GM12878 (cell line): ENCODE measurements at regions of chr15 and their contacts with region 1.

Region 1: GRCh38 chr15:73650416-73651126 is 17.4 kb upstream of the NPTN start:
- DNase-seq: no peak
- ATAC-seq: peak; percentile 31; the same call in 2 of the 3 replicates
- H3K4me3 ChIP-seq: no peak overlapping the region
- H3K27ac ChIP-seq: no peak overlapping the region
- H3K4me1 ChIP-seq: no peaks in the 10 kb centered on the region; the same call in 1 of the 2 replicates
- H3K27me3 ChIP-seq: no peaks in the 10 kb centered on the region
- CTCF ChIP-seq: no peak
- EP300 ChIP-seq: no peak
- POLR2A ChIP-seq: no peak
- RAD21 ChIP-seq: no peak

Region 2: DNA sequence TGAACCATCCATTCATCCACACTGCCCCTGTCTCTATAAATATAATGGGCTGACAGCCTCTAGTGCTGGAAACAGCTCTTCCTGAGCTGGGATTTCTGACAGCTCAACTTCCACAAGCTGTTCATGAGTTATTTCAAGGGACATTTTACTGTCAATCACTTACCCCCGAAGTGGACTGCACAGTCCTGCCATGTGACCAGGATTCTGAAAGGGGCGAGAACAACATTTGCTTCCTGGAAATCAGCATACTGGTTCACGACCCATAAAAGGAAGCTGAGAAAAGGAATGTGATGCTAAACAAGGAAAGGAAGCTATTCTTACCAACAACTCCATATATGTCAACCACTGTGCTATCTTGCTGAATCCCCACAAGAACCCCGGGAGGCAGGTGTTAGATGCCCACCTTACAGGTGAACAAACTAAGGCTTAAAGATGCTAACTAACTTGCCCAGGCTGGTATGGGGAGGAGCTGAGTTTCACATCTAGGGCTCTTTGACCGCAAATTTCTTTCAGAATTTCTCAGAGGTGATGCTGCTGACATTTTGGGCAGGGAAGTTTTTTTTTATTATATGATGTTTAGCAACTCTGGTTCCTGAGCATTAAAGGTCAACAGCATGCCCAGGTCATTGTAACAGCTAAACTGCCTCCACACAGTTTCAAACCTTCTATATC is 224.1 kb before region 1 on chr15:
- CTCF ChIA-PET with region 1: no interaction called
- POLR2A ChIA-PET with region 1: no interaction called
- RAD21 ChIA-PET with region 1: no interaction called
- SMC1A ChIA-PET with region 1: no interaction called
- in situ Hi-C with region 1: no loop called
- intact Hi-C with region 1: loop called (anchors 10 kb)
- DNase-seq: no peak
- ATAC-seq: peak; percentile 57; the same call in 2 of the 3 replicates
- H3K4me3 ChIP-seq: no peak overlapping the region
- H3K27ac ChIP-seq: no peak overlapping the region
- H3K4me1 ChIP-seq: no peaks in the 10 kb centered on the region
- H3K27me3 ChIP-seq: no peaks in the 10 kb centered on the region; a peak in 2 of 4 replicates
- CTCF ChIP-seq: no peak
- EP300 ChIP-seq: no peak
- POLR2A ChIP-seq: no peak
- RAD21 ChIP-seq: no peak

Region 3: DNA sequence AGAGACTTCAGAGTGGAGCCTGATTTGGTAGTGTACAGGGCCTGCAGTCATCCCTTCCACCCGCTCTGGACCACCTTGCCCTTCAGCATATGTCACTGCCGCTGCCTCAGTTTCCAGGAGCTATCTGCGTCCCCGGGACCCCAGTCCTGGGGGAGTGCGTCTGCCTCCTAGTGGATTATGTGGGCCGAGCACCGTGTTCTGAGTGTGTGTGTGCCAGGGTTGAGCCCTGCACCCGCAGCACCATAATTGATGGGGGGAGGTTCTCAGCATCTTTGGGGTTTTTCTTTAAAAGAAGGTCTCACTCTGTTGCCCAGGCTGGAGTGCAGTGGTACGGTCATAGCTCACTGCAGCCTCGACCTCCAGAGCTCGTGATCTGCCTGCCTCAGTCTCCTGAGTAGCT is 67.2 kb after region 1 on chr15:
- CTCF ChIA-PET with region 1: no interaction called
- POLR2A ChIA-PET with region 1: no interaction called
- RAD21 ChIA-PET with region 1: no interaction called
- SMC1A ChIA-PET with region 1: no interaction called
- in situ Hi-C with region 1: no loop called
- intact Hi-C with region 1: no loop called
- DNase-seq: no peak
- ATAC-seq: no peak
- H3K4me3 ChIP-seq: no peak overlapping the region
- H3K27ac ChIP-seq: no peak overlapping the region
- H3K4me1 ChIP-seq: no peaks in the 10 kb centered on the region
- H3K27me3 ChIP-seq: peaks cover 3 to 4% of the 10 kb centered on the region in 2 experiments; a peak in 2 of 4 replicates
- CTCF ChIP-seq: 0 out of 6 replicates have a peak, but pooled peaks of 1 of the 3 experiments have one; percentile 12
- EP300 ChIP-seq: no peak
- POLR2A ChIP-seq: no peak
- RAD21 ChIP-seq: no peak